HCT116 (cell line): ENCODE measurements at regions of chr2 and their contacts with region 1.

Region 1: DNA sequence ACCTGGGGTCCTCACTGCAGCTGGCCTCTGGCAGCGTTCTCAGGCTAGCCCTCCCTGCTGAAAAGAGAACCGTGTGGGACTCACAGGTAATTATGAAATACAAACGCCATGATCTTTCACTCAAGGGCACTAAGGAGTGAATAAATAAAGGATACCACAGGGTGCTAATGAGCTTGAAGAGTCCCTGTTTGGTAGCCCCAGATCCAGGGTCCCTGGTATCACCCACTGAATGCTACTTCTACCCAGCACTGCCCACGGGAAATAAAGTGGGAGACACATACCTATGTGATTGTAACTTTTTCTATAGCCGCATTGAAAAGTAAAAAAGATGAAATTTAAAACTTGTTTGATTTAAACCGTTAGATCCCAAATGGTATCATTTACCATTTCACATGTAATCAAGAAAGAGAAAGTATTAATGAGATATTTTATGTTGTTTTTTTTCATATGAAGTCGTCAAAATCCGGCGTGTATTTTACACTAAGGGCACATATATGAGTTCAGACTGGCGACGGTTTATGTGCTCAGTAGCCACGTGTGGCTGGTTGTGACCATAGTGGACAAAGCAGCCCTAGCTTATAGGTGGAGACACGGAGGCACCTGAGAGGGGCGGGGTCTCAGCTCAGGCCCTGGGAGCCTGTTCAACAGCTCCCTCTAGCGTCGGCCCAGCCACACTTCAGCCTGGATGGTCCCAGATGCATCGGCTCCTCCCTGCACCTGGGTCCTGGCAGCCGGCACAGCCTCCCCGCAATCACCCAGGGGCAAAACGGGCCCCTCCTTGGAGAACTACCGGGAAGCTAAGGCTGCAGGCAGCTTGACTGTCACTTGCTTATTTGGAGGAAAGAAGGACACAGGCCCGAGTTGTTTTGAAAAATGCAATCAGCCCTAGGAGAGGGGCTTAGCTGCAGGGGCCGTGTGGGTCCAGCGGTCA is 39.2 kb downstream of the ODC1 start:
- DNase-seq: peak; percentile 79
- ATAC-seq: peak; percentile 82
- H3K4me3 ChIP-seq: peak overlapping the region; percentile 12 to 40; a peak in 3 of 4 replicates
- H3K27ac ChIP-seq: peak overlapping the region; percentile 84
- H3K4me1 ChIP-seq: peaks cover 55 to 77% of the 10 kb centered on the region in 2 experiments
- H3K27me3 ChIP-seq: no peaks in the 10 kb centered on the region
- CTCF ChIP-seq: peak in 2 of 3 experiments; percentile 95 to 96; a peak in 4 of 6 replicates
- POLR2A ChIP-seq: peak; percentile 70
- RAD21 ChIP-seq: no peak

Region 2: DNA sequence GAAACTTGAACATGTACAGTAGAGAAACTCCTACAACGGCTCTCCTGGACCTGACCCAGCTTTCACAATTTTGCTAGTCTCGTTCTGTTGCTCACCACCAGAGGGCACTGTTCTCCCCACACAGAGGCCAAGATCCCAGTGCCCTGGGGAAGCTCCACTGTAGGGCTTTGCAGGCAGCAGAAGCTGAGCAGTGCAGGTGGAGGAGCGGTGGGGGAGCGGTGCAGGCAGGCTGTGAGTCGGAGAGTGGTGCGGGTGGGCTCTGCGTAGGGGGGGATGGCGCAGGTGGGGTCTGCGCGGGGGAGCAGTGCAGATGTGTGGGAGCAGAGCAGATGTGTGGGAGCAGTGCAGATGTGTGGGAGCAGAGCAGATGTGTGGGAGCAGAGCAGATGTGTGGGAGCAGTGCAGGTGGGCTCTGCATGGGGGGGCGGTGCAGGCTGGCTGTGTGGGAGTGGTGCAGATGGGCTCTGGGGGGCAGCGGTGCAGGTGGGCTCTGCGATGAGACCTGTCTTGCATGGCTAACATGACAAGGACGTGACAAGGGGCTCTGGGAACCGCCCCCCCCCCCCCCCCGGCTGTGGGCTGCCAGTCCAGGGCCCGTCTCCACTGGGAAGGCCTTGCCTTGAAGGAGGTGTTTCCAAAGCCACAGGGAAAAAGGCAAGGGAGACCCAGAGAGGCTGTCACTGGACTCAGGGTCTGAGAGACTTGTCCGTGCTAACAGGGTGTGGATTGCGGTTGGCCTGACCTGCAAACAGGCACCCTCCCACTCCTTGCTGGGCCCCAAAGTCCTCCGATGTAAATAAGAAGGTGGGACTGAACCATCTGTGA is 336.0 kb before region 1 on chr2:
- CTCF ChIA-PET with region 1: interaction called, 15 read pairs
- POLR2A ChIA-PET with region 1: interaction called, 3 read pairs
- RAD21 ChIA-PET with region 1: interaction called in 1 of 2 experiments, 3 read pairs
- intact Hi-C with region 1: no loop called
- DNase-seq: peak; percentile 69
- ATAC-seq: peak; percentile 98
- H3K4me3 ChIP-seq: no peak overlapping the region
- H3K27ac ChIP-seq: no peak overlapping the region
- H3K4me1 ChIP-seq: peaks cover 0 to 8% of the 10 kb centered on the region in 2 experiments; a peak in 2 of 4 replicates
- H3K27me3 ChIP-seq: no peaks in the 10 kb centered on the region
- CTCF ChIP-seq: peak; percentile 86 to 93 (median 92)
- POLR2A ChIP-seq: no peak
- RAD21 ChIP-seq: peak; percentile 92

Region 3: DNA sequence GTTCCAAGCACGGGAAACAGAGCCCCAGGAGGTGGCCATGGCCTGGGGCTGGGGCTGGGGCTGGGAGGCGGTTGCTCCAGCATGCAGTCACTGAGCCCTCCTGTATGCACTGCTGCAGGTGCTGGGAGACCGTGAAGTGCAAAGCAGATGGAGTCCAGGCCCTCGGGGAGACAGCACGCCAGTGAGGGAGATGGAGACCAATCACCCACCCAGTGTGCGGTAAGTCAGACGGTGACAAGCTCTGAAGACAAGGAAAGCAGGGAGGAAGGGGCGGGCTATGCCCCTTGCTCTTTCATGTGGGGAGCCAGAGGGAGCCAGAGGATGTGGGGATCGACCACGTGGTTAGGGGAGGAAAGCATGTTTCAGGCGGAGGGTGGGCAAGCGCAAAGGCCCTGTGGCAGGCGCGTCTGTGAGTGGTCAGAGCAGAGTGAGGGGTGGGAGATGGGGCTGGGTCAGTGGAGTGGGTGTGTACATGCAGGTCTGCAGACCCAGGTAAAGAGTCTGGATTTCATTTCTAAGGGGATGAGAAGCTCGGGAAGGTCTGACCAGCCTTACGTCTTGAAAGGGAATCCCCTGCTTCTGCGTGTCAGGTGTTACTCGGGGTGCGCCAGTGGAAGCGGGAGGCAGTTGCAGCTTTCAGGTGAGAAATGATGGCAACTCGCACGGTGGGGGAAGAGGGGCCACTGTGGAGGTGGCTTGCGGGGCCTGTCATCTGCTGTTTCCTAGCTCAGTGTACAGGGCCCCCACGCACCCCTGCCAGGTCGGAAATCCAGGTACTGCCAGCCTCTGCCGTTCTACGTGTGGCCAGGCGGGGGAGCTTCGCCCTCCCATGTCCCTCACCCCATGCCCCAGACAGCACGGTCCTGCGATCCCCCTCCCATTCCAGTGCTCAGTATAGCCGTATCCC is 266.9 kb before region 1 on chr2:
- CTCF ChIA-PET with region 1: interaction called, 17 read pairs
- POLR2A ChIA-PET with region 1: interaction called, 3 read pairs
- RAD21 ChIA-PET with region 1: interaction called, 3 to 7 read pairs
- intact Hi-C with region 1: loop called (anchors 1 kb)
- DNase-seq: no peak
- ATAC-seq: peak; percentile 81
- H3K4me3 ChIP-seq: no peak overlapping the region
- H3K27ac ChIP-seq: no peak overlapping the region
- H3K4me1 ChIP-seq: peaks cover 2 to 17% of the 10 kb centered on the region in 2 experiments; a peak in 3 of 4 replicates
- H3K27me3 ChIP-seq: no peaks in the 10 kb centered on the region
- CTCF ChIP-seq: peak; percentile 49 to 62 (median 60); a peak in 5 of 6 replicates
- POLR2A ChIP-seq: no peak
- RAD21 ChIP-seq: peak; percentile 78

Region 4: GRCh38 chr2:10269711-10270610 is 139.0 kb before region 1 on chr2:
- CTCF ChIA-PET with region 1: interaction called, 19 read pairs
- POLR2A ChIA-PET with region 1: no interaction called
- RAD21 ChIA-PET with region 1: interaction called, 3 to 4 read pairs
- intact Hi-C with region 1: loop called (anchors 1 kb)
- DNase-seq: no peak
- ATAC-seq: peak; percentile 31
- H3K4me3 ChIP-seq: no peak overlapping the region
- H3K27ac ChIP-seq: no peak overlapping the region; the same call in 1 of the 2 replicates
- H3K4me1 ChIP-seq: peaks cover 10 to 26% of the 10 kb centered on the region in 2 experiments; a peak in 3 of 4 replicates
- H3K27me3 ChIP-seq: no peaks in the 10 kb centered on the region
- CTCF ChIP-seq: no peak
- POLR2A ChIP-seq: no peak
- RAD21 ChIP-seq: no peak

Region 5: GRCh38 chr2:10302479-10303180 is 106.3 kb before region 1 on chr2 and contains the start of gene HPCAL1:
- CTCF ChIA-PET with region 1: interaction called, 29 read pairs
- POLR2A ChIA-PET with region 1: interaction called, 3 read pairs
- RAD21 ChIA-PET with region 1: interaction called in 1 of 2 experiments, 4 read pairs
- intact Hi-C with region 1: no loop called
- DNase-seq: peak; percentile 36
- ATAC-seq: peak; percentile 78
- H3K4me3 ChIP-seq: peak within 1 kb of the TSS; percentile 72 to 96
- H3K27ac ChIP-seq: peak within 1 kb of the TSS; percentile 68
- H3K4me1 ChIP-seq: peaks cover 22 to 71% of the 10 kb centered on the region in 2 experiments
- H3K27me3 ChIP-seq: no peaks in the 10 kb centered on the region
- CTCF ChIP-seq: peak in 2 of 3 experiments; percentile 47 to 58; a peak in 4 of 6 replicates
- POLR2A ChIP-seq: peak; percentile 59
- RAD21 ChIP-seq: no peak
- total RNA-seq, gene HPCAL1: 111 TPM

Region 6: GRCh38 chr2:10434886-10435819 is 26.2 kb after region 1 on chr2:
- CTCF ChIA-PET with region 1: interaction called, 32 read pairs
- POLR2A ChIA-PET with region 1: interaction called, 5 read pairs
- RAD21 ChIA-PET with region 1: interaction called, 6 to 11 read pairs
- intact Hi-C with region 1: no loop called
- DNase-seq: peak; percentile 43
- ATAC-seq: peak; percentile 72
- H3K4me3 ChIP-seq: no peak overlapping the region
- H3K27ac ChIP-seq: no peak overlapping the region
- H3K4me1 ChIP-seq: peaks cover 4 to 34% of the 10 kb centered on the region in 2 experiments; a peak in 3 of 4 replicates
- H3K27me3 ChIP-seq: no peaks in the 10 kb centered on the region
- CTCF ChIP-seq: peak; percentile 92 to 96 (median 95)
- POLR2A ChIP-seq: no peak
- RAD21 ChIP-seq: peak; percentile 100

Region 7: DNA sequence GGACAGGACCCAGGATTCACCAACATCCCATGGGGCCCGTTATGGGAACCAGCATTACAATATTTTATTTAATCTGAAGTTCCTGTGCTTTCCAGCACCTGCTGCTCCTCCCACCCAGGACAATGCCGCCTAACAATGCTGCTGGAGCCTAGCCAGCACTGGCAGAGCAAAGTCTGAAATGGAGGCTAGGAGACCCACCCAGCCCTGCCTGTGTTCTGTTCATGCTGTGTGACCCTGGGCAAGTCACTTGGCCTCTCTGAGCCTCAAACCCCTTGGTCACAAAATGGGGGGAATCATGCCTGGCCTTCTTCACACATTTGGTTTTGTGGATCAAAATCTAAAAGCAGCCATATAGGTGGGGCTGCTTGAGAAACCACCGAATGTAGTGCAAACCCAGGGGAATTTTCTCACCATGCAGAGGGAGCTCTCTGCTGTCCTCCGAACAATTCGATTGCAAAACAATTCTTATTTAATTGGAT is 77.7 kb after region 1 on chr2:
- CTCF ChIA-PET with region 1: no interaction called
- POLR2A ChIA-PET with region 1: no interaction called
- RAD21 ChIA-PET with region 1: no interaction called
- intact Hi-C with region 1: no loop called
- DNase-seq: no peak
- ATAC-seq: no peak
- H3K4me3 ChIP-seq: no peak overlapping the region
- H3K27ac ChIP-seq: no peak overlapping the region
- H3K4me1 ChIP-seq: no peaks in the 10 kb centered on the region
- H3K27me3 ChIP-seq: peaks cover 52% of the 10 kb centered on the region
- CTCF ChIP-seq: no peak
- POLR2A ChIP-seq: no peak
- RAD21 ChIP-seq: no peak

Region 8: GRCh38 chr2:12116228-12116750 is 1707.4 kb after region 1 on chr2:
- CTCF ChIA-PET with region 1: no interaction called
- POLR2A ChIA-PET with region 1: no interaction called
- RAD21 ChIA-PET with region 1: no interaction called
- intact Hi-C with region 1: no loop called
- DNase-seq: no peak
- ATAC-seq: no peak
- H3K4me3 ChIP-seq: no peak overlapping the region
- H3K27ac ChIP-seq: no peak overlapping the region
- H3K4me1 ChIP-seq: no peaks in the 10 kb centered on the region
- H3K27me3 ChIP-seq: no peaks in the 10 kb centered on the region
- CTCF ChIP-seq: no peak
- POLR2A ChIP-seq: no peak
- RAD21 ChIP-seq: no peak